MCF 10A (cell line): ENCODE measurements at regions of chrX and their contacts with region 1.

Region 1: DNA sequence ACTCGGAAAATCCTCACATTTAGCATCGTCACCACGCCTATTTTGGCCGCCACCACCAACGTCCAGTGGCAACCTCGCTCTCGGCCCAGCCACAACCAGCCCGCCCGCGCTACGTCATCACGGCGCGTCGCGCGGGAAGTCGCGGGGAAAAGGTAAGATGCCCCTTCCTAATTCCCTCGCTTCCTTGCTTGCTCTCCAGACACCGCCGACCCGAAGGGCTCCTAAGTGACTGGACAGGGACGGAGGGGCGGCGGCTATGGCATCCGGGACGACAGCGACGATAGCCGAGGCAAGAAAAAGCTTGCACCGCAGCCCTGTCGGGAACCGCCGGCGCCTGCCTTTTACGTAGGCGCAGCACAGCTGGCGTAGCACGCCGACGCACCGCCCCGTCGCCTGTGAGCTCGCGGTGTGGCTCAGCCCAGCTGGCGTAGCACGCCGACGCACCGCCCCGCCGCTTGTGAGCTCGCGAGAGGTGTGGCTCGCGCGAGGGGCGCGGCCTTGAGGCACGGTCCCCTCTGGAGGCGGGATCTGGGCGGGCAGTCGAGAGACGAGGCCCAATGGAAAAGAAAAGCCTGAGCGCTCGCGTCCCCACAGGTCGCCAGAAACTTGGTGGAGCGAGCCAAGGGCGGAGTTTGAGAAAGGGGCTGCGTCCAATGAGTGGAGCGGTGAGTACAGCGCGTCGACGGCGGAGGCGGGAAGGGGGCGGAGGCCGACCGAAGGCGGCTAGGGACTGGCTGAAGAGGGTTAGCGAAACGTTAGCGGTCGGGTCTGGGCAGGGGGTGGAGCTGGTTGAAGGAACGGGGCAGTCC is at the start of gene HDAC6:
- DNase-seq: peak; percentile 97
- H3K4me3 Mint-ChIP-seq: peak within 1 kb of the TSS; percentile 92
- H3K27ac Mint-ChIP-seq: peak within 1 kb of the TSS; percentile 100
- H3K4me1 Mint-ChIP-seq: peaks cover 5% of the 10 kb centered on the region
- H3K27me3 Mint-ChIP-seq: no peaks in the 10 kb centered on the region
- CTCF ChIP-seq: no peak
- total RNA-seq, gene HDAC6: 45.1 and 53.2 TPM in 2 replicates

Region 2: DNA sequence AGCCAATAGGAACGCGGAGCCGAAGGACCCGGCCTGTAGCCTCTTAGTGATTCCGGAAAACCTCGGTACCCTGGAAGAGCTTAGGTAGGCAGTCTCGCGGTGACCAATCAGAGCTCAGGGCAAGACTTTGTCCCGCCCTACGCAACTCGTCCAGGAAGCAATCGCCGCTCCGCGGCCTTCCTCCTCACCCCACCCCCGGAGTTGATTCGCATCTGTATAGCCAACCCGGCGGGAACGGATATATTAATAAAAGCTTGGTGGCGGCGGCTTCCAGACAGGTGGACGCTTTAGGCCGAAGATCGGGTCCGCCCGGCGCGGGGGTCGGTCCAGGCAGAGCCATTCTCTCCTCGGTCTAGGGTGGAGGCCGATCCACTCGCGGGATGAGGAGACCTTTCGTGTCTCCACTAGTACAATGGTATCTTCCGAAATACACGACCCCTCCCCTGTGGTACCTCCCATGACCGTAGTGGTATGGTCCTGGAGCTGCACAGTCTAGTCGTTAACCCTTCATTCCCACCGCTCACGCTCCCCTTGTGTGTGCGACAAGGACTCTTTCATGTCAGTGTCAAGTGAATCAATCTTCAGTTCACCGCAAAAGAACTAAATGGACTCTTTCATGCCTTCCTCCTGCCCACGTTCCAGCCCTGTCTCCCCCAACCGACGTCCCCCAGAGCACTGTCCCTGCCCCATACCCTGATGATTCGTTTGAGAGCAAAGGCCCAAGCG is 64.1 kb before region 1 on chrX:
- CTCF ChIA-PET with region 1: no interaction called
- POLR2A ChIA-PET with region 1: interaction called, 10 read pairs
- intact Hi-C with region 1: no loop called
- DNase-seq: peak; percentile 94
- H3K4me3 Mint-ChIP-seq: peak overlapping the region; percentile 74
- H3K27ac Mint-ChIP-seq: peak overlapping the region; percentile 68
- H3K4me1 Mint-ChIP-seq: peaks cover 6% of the 10 kb centered on the region
- H3K27me3 Mint-ChIP-seq: no peaks in the 10 kb centered on the region
- CTCF ChIP-seq: no peak

Region 3: DNA sequence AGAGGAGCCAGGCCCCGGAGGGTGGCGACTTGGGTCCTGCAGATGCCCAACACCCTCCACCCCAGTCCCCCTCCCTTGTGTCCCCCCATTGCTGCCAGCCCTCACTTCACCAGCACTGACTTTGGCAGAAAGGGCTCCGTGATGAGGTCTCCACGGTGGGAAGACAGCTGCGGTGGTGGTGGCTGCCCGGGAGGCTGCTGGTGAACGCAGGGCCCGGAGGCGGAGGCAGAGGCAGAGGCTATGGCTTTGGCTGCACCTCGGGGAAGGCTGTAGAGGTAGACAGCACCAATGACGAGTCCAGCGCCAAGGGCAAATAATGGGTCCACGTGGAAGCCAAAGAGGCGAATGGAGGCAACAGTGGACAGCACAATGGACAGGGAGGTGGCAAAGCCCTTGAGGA is 103.1 kb after region 1 on chrX:
- CTCF ChIA-PET with region 1: no interaction called
- POLR2A ChIA-PET with region 1: no interaction called
- intact Hi-C with region 1: no loop called
- DNase-seq: no peak
- H3K4me3 Mint-ChIP-seq: no peak overlapping the region
- H3K27ac Mint-ChIP-seq: no peak overlapping the region
- H3K4me1 Mint-ChIP-seq: no peaks in the 10 kb centered on the region
- H3K27me3 Mint-ChIP-seq: no peaks in the 10 kb centered on the region
- CTCF ChIP-seq: no peak

Region 4: GRCh38 chrX:48917139-48918001 is 115.9 kb after region 1 on chrX:
- CTCF ChIA-PET with region 1: no interaction called
- POLR2A ChIA-PET with region 1: interaction called, 4 read pairs
- intact Hi-C with region 1: loop called (anchors 5 kb)
- DNase-seq: peak; percentile 88
- H3K4me3 Mint-ChIP-seq: peak overlapping the region; percentile 94
- H3K27ac Mint-ChIP-seq: peak overlapping the region; percentile 96
- H3K4me1 Mint-ChIP-seq: peaks cover 18% of the 10 kb centered on the region
- H3K27me3 Mint-ChIP-seq: no peaks in the 10 kb centered on the region
- CTCF ChIP-seq: peak; percentile 75

Region 5: DNA sequence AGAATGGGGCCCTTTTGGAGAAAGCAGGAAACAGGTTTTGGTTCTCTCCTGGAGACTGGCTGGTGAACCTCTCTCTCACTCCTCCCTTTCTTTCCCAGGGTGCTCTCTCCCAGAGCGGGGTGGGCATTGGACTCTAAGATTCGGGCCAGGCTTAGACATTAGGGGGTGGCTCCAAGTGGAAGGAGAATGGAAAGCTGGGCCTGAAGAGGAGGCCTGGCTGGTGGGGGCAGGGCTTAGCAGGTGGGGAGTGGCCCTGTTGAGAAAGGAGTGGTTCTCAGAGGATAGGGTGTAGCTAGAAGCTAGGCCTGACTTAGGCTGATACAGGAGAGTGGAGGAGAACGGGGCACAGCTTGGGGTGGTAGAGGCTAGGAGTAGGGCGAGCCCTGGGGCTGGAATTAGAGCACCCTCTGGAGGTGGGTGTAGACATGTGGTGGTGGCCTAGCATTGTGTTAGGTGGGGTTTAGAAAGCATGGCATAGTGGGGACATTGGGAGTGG is 375.9 kb after region 1 on chrX:
- CTCF ChIA-PET with region 1: no interaction called
- POLR2A ChIA-PET with region 1: no interaction called
- intact Hi-C with region 1: no loop called
- DNase-seq: peak; percentile 54
- H3K4me3 Mint-ChIP-seq: no peak overlapping the region
- H3K27ac Mint-ChIP-seq: peak overlapping the region; percentile 47
- H3K4me1 Mint-ChIP-seq: peaks cover 21% of the 10 kb centered on the region
- H3K27me3 Mint-ChIP-seq: no peaks in the 10 kb centered on the region
- CTCF ChIP-seq: no peak